A549 (cell line): ENCODE measurements at regions of chrX and their contacts with region 1.

Region 1: GRCh38 chrX:136251041-136251991 is at the start of gene MAP7D3:
- DNase-seq: peak; percentile 54 to 69
- ATAC-seq: peak; percentile 94 to 96
- H3K4me3 ChIP-seq: peak within 1 kb of the TSS; percentile 98
- H3K27ac ChIP-seq: peak within 1 kb of the TSS; percentile 91 to 95
- H3K4me1 ChIP-seq: peaks cover 9% of the 10 kb centered on the region; the same call in 1 of the 3 replicates
- CTCF ChIP-seq: no peak
- EP300 ChIP-seq: no peak
- POLR2A ChIP-seq: peak; percentile 85
- RAD21 ChIP-seq: no peak
- polyA plus RNA-seq, gene MAP7D3: 10.3 and 13.1 TPM in 2 replicates

Region 2: GRCh38 chrX:136237074-136237473 is 14.2 kb before region 1 on chrX:
- CTCF ChIA-PET with region 1: no interaction called
- POLR2A ChIA-PET with region 1: no interaction called
- DNase-seq: no peak
- ATAC-seq: no peak
- H3K4me3 ChIP-seq: no peak overlapping the region
- H3K27ac ChIP-seq: no peak overlapping the region
- H3K4me1 ChIP-seq: no peaks in the 10 kb centered on the region
- CTCF ChIP-seq: no peak
- EP300 ChIP-seq: no peak
- POLR2A ChIP-seq: no peak
- RAD21 ChIP-seq: no peak

Region 3: DNA sequence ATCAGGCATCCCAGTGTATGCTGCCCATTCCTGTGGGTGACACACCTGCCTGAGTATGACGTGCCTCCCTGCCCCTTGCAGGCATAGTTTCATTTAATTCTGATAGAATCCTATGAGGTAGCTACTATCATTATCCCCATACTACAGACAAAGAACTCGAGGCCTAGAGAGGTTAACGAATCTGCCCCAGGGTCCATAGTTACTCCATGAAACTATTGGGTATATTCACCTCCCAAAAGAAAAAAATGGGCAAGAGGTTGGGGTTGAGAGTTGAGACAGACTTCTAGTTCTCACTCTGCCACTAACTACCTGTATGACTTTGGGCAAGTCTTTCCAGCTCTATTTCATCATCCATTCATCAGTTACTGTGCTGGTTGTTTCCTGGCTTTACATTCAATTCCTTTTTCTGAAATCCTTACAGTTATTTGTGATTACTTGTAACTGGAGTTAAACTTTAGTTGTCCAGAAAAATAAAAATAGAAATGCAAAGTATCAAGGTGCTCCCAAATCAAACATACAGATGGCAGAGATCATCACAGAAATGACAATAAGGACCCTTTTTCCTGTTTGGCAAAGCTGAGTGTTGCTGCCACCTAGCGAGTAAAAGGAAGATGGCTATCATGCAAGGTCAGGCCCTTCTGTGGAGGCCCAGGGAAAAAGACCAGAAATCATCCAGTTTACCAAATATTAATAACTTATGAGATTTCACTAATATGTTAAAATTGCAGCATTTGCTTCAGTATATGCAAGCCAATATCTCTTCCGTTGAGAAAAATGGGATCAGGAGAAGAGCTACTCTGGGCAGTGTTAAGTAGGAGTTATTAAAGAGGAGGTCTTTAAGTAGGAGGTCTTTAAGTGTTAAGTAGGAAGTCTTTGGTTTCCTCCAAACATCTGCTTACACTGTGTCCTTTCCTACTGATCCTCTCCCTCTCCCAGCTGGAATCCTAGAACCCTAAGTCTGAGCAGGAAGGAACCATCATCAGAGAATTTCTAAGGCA is 17.0 kb after region 1 on chrX:
- CTCF ChIA-PET with region 1: interaction called, 17 read pairs
- POLR2A ChIA-PET with region 1: no interaction called
- DNase-seq: peak; percentile 15 to 52
- ATAC-seq: peak; percentile 80 to 86; a peak in 5 of 6 replicates
- H3K4me3 ChIP-seq: no peak overlapping the region
- H3K27ac ChIP-seq: no peak overlapping the region
- H3K4me1 ChIP-seq: no peaks in the 10 kb centered on the region
- CTCF ChIP-seq: peak; percentile 68
- EP300 ChIP-seq: no peak
- POLR2A ChIP-seq: no peak
- RAD21 ChIP-seq: peak; percentile 67 to 74